Endothelial cell of umbilical vein (primary cell): ENCODE measurements at regions of chr3 and their contacts with region 1.

Region 1: DNA sequence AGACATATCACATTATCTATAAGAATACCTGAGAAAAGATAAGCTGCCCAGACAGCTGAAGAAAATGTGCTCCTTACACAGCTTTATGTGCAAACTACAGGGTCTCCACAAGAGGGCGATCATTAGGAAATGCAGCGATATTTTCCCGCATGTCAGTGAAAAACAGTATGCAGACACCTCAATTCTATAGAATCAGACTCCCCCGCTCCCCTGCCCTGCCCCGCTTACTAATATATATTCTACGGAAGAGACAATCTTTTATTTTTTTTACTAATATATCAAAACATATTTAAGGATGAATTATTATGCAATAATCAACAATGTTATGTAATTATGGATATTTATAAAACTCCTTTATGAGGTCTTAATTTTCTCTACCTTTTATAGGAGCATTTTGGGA is 681.3 kb downstream of the ROBO1 start:
- DNase-seq: peak; percentile 57
- H3K4me3 ChIP-seq: no peak overlapping the region
- H3K27ac ChIP-seq: no peak overlapping the region
- H3K4me1 ChIP-seq: no peaks in the 10 kb centered on the region
- H3K27me3 ChIP-seq: no peaks in the 10 kb centered on the region
- CTCF ChIP-seq: peak; percentile 65 to 71
- POLR2A ChIP-seq: no peak

Region 2: GRCh38 chr3:78659386-78659987 is 427.0 kb before region 1 on chr3:
- CTCF ChIA-PET with region 1: interaction called, 16 read pairs
- POLR2A ChIA-PET with region 1: no interaction called
- dilution Hi-C with region 1: no loop called
- intact Hi-C with region 1: loop called (anchors 1 kb)
- DNase-seq: peak; percentile 52
- H3K4me3 ChIP-seq: no peak overlapping the region
- H3K27ac ChIP-seq: no peak overlapping the region
- H3K4me1 ChIP-seq: no peaks in the 10 kb centered on the region
- H3K27me3 ChIP-seq: no peaks in the 10 kb centered on the region
- CTCF ChIP-seq: peak; percentile 20 to 29
- POLR2A ChIP-seq: no peak

Region 3: DNA sequence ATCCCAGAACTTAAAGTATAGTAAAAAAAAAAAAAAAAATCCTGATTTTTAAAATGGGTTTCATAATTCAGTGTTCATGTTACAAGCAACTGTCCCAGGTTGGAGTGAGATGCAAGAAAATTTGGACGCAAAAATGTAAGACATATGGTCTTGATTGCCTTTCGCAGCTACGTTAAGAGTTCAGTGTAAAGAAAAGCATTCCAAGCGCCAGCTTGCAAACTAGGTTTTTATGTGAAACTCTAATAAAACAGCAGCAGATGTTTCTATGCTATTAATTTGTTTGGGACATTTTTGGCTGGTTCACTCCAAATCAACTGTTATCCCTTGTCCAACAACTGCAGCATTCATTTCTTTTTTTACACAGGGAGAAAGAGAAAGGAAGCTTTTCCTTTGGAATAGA is 276.5 kb before region 1 on chr3:
- CTCF ChIA-PET with region 1: no interaction called
- POLR2A ChIA-PET with region 1: no interaction called
- dilution Hi-C with region 1: no loop called
- intact Hi-C with region 1: no loop called
- DNase-seq: no peak
- H3K4me3 ChIP-seq: no peak overlapping the region
- H3K27ac ChIP-seq: no peak overlapping the region
- H3K4me1 ChIP-seq: no peaks in the 10 kb centered on the region
- H3K27me3 ChIP-seq: no peaks in the 10 kb centered on the region
- CTCF ChIP-seq: no peak
- POLR2A ChIP-seq: no peak

Region 4: DNA sequence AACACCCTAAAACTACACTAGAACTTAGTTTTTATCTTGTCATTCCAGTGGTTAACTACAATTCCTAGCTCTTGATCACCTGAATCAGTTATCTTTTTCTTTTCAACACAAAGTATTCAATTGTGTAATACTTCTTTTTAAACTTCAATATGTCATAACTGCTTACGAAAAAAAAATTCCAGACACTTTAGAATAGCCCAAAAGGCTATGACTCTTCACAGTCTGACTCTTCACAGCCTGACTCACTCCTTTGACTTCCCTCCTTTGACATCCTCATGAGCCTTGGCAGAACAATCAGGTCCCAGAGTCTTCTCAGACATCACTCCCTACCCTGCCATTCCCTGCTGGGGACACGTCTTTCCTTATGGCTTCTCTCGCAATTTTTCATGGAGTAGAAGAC is 45.8 kb before region 1 on chr3:
- CTCF ChIA-PET with region 1: interaction called, 10 read pairs
- POLR2A ChIA-PET with region 1: no interaction called
- dilution Hi-C with region 1: no loop called
- intact Hi-C with region 1: no loop called
- DNase-seq: no peak
- H3K4me3 ChIP-seq: no peak overlapping the region
- H3K27ac ChIP-seq: no peak overlapping the region
- H3K4me1 ChIP-seq: no peaks in the 10 kb centered on the region
- H3K27me3 ChIP-seq: no peaks in the 10 kb centered on the region
- CTCF ChIP-seq: no peak
- POLR2A ChIP-seq: no peak

Region 5: DNA sequence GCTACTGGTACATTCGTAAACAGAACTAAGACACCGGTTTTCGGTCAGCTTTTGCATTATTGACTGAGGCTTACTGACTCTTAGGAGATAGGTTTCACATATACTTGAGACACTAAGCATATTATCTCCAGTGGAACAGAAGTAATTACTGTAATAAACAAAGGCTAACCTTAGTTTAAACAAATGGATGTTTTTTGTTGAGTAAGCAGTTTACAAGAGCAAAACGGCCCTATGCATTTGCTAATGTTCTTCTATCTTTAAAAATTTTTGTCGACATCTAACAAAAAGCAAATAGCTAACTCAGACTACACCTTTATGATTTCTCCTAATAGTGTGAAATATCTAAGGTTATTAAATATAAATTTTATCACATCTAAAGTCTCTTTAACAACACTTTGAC is 16.8 kb after region 1 on chr3:
- CTCF ChIA-PET with region 1: interaction called, 40 read pairs
- POLR2A ChIA-PET with region 1: no interaction called
- dilution Hi-C with region 1: no loop called
- intact Hi-C with region 1: no loop called
- DNase-seq: no peak
- H3K4me3 ChIP-seq: no peak overlapping the region
- H3K27ac ChIP-seq: no peak overlapping the region
- H3K4me1 ChIP-seq: no peaks in the 10 kb centered on the region
- H3K27me3 ChIP-seq: no peaks in the 10 kb centered on the region
- CTCF ChIP-seq: no peak
- POLR2A ChIP-seq: no peak

Region 6: DNA sequence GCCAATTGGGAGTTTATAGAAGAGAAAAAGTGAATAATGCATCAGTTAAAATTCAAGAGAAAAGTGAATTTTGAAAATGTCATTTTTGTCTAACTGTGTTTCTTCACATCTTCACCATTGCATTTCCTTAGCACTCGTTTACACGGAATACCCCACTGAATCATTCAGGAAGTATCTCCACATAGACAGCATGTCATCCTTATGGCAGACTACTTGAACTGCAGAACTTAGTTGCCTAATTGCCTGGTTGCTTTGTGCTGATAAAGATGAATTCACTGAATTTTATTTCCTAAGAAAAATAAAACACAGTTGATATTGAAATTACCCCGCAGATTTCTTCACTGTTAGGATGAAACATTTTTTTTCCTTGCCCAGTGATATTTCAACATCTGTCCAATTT is 54.2 kb after region 1 on chr3:
- CTCF ChIA-PET with region 1: no interaction called
- POLR2A ChIA-PET with region 1: no interaction called
- dilution Hi-C with region 1: no loop called
- intact Hi-C with region 1: no loop called
- DNase-seq: no peak
- H3K4me3 ChIP-seq: no peak overlapping the region
- H3K27ac ChIP-seq: no peak overlapping the region
- H3K4me1 ChIP-seq: no peaks in the 10 kb centered on the region
- H3K27me3 ChIP-seq: no peaks in the 10 kb centered on the region
- CTCF ChIP-seq: no peak
- POLR2A ChIP-seq: no peak

Region 7: DNA sequence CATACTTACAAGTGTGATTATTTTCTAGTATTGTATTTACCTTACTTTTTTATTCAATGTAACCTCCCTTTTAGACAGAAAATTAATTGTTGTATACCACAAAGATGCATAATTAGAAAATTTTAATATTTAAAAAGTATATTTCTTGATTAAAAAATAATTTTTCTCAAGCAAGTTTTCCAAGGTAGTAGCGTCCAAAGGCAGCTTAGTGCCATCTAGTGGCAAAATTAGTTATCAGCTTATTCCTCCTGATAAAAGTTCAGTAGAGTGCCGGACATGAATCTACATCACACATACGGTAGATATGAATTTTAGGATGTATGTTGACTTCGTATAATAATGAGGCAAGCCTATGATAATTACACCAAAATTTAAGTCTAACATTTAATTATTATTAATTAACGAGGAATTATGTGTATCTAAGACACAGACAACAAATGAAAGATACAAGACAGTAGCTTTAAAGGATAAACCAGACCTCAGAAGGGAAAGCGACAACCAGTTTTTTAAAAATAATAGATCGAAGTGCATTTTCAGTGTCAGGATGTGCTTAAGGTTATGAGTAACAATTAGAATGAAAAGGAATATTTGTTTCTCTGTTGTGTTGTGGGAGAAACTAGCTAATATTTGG is 275.3 kb after region 1 on chr3:
- CTCF ChIA-PET with region 1: interaction called, 301 read pairs
- POLR2A ChIA-PET with region 1: interaction called, 3 read pairs
- dilution Hi-C with region 1: no loop called
- intact Hi-C with region 1: loop called (anchors 1 kb)
- DNase-seq: peak; percentile 48
- H3K4me3 ChIP-seq: no peak overlapping the region
- H3K27ac ChIP-seq: no peak overlapping the region
- H3K4me1 ChIP-seq: peaks cover 4% of the 10 kb centered on the region
- H3K27me3 ChIP-seq: no peaks in the 10 kb centered on the region
- CTCF ChIP-seq: peak; percentile 55 to 57
- POLR2A ChIP-seq: no peak

Region 8: GRCh38 chr3:79497447-79498111 is 411.1 kb after region 1 on chr3:
- CTCF ChIA-PET with region 1: interaction called, 60 read pairs
- POLR2A ChIA-PET with region 1: no interaction called
- dilution Hi-C with region 1: no loop called
- intact Hi-C with region 1: loop called (anchors 1 kb)
- DNase-seq: peak; percentile 33
- H3K4me3 ChIP-seq: no peak overlapping the region
- H3K27ac ChIP-seq: no peak overlapping the region
- H3K4me1 ChIP-seq: no peaks in the 10 kb centered on the region
- H3K27me3 ChIP-seq: no peaks in the 10 kb centered on the region
- CTCF ChIP-seq: peak; percentile 25 to 35
- POLR2A ChIP-seq: no peak

Region 9: DNA sequence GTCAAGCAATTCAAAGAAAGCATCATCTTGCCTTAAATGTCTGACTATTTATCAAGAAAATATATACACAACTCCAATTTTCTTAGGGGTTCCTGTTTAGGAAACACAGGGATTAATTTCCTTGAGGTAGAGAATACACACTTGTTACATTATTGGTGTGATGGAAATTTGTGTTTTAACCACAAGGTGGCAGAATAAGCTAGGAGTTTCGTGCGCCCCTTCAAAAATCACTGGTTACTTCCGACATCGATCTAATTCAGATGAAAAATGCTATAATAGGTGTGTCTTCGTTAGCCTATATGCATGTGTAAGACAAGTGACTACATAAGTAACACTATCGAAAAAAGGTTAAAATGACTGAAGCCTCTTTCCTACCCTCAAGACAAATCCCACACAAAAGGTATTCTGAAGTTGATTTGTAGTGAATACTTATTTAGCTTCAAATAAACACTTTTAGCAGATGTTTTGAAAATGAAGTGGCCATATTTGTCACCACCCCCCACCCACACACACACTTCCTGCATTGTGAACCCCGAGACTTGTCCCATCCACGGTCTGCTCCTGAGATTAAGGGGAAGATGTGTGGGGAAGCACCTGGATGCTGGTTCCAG is 434.8 kb after region 1 on chr3:
- CTCF ChIA-PET with region 1: interaction called, 96 read pairs
- POLR2A ChIA-PET with region 1: no interaction called
- dilution Hi-C with region 1: no loop called
- intact Hi-C with region 1: loop called (anchors 1 kb)
- DNase-seq: peak; percentile 79
- H3K4me3 ChIP-seq: no peak overlapping the region
- H3K27ac ChIP-seq: no peak overlapping the region
- H3K4me1 ChIP-seq: peaks cover 6% of the 10 kb centered on the region
- H3K27me3 ChIP-seq: no peaks in the 10 kb centered on the region
- CTCF ChIP-seq: peak; percentile 17 to 30
- POLR2A ChIP-seq: no peak